MCF 10A (cell line): ENCODE measurements at regions of chr5 and their contacts with region 1.

Region 1: GRCh38 chr5:140664359-140665119 is at the start of gene WDR55:
- DNase-seq: peak; percentile 98
- H3K4me3 Mint-ChIP-seq: peak within 1 kb of the TSS; percentile 100
- H3K27ac Mint-ChIP-seq: peak within 1 kb of the TSS; percentile 98
- H3K4me1 Mint-ChIP-seq: peaks cover 32% of the 10 kb centered on the region
- H3K27me3 Mint-ChIP-seq: no peaks in the 10 kb centered on the region
- CTCF ChIP-seq: no peak
- total RNA-seq, gene WDR55: 35.0 and 36.4 TPM in 2 replicates

Region 2: DNA sequence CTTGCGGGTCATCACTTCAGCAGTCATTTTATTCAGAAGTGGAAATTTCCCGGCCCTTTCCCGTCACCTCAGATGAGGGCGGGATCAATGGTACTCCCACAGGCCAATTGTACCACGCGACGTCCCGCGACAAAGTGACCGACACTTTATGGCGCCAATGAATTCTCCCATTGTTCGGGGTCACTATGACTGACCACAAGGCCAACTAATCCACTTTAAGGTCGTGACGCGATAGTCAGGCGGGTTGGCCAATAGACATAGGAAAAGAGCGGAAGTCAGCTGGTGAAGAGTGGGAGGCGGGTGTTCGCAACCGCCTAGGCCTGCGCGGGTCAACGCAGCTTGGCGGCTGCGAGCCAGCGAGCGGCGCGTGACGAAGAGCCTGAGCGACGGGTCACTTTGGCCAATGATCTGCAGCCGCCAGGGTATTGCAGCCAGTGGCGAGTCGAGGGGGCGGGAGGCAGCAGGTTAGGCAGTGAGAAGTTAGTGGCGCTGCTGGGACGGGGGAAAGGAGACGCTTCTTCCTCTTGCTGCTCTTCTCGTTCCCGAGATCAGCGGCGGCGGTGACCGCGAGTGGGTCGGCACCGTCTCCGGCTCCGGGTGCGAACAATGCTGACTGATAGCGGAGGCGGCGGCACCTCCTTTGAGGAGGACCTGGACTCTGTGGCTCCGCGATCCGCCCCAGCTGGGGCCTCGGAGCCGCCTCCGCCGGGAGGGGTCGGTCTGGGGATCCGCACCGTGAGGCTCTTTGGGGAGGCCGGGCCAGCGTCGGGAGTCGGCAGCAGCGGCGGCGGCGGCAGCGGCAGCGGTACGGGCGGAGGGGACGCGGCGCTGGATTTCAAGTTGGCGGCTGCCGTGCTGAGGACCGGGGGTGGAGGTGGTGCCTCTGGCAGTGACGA is 262.9 kb before region 1 on chr5 and contains the start of gene ANKHD1:
- CTCF ChIA-PET with region 1: no interaction called
- POLR2A ChIA-PET with region 1: interaction called, 20 read pairs
- intact Hi-C with region 1: no loop called
- DNase-seq: peak; percentile 100
- H3K4me3 Mint-ChIP-seq: no peak within 1 kb of the TSS
- H3K27ac Mint-ChIP-seq: no peak within 1 kb of the TSS
- H3K4me1 Mint-ChIP-seq: peaks cover 19% of the 10 kb centered on the region
- H3K27me3 Mint-ChIP-seq: no peaks in the 10 kb centered on the region
- CTCF ChIP-seq: no peak
- total RNA-seq, gene ANKHD1: 142 and 146 TPM in 2 replicates

Region 3: DNA sequence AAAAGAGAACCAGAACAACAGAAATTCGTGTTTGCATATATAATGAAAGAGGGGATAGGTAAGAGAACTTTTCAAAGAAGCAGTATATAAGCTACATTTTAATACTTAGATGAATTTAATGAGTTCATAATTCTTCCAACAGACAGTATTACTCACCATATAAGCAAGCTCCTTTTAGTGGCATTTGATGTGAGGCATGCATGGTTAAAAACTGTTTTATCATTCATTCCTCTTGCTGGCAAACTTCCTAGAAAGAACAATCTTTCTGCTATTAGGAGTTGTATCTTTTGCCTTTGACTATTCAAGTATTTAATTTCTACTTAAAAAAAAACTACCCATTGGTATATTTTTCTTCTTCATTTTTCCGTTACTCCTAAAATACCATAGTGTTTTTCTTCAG is 182.8 kb before region 1 on chr5:
- CTCF ChIA-PET with region 1: no interaction called
- POLR2A ChIA-PET with region 1: no interaction called
- intact Hi-C with region 1: no loop called
- DNase-seq: no peak
- H3K4me3 Mint-ChIP-seq: no peak overlapping the region
- H3K27ac Mint-ChIP-seq: no peak overlapping the region
- H3K4me1 Mint-ChIP-seq: peaks cover 6% of the 10 kb centered on the region
- H3K27me3 Mint-ChIP-seq: no peaks in the 10 kb centered on the region
- CTCF ChIP-seq: no peak

Region 4: GRCh38 chr5:140557136-140557805 is 107.3 kb before region 1 on chr5 and contains the start of gene SRA1:
- CTCF ChIA-PET with region 1: no interaction called
- POLR2A ChIA-PET with region 1: interaction called, 33 read pairs
- intact Hi-C with region 1: no loop called
- DNase-seq: peak; percentile 96
- H3K4me3 Mint-ChIP-seq: peak within 1 kb of the TSS; percentile 87
- H3K27ac Mint-ChIP-seq: peak within 1 kb of the TSS; percentile 91
- H3K4me1 Mint-ChIP-seq: peaks cover 38% of the 10 kb centered on the region
- H3K27me3 Mint-ChIP-seq: no peaks in the 10 kb centered on the region
- CTCF ChIP-seq: no peak
- total RNA-seq, gene SRA1: 105 and 107 TPM in 2 replicates

Region 5: GRCh38 chr5:140575309-140575708 is 89.2 kb before region 1 on chr5:
- CTCF ChIA-PET with region 1: no interaction called
- POLR2A ChIA-PET with region 1: interaction called, 3 read pairs
- intact Hi-C with region 1: loop called (anchors 1 kb)
- DNase-seq: peak; percentile 92
- H3K4me3 Mint-ChIP-seq: no peak overlapping the region
- H3K27ac Mint-ChIP-seq: no peak overlapping the region
- H3K4me1 Mint-ChIP-seq: no peaks in the 10 kb centered on the region
- H3K27me3 Mint-ChIP-seq: no peaks in the 10 kb centered on the region
- CTCF ChIP-seq: peak; percentile 82

Region 6: GRCh38 chr5:140677947-140678346 is 13.4 kb after region 1 on chr5:
- CTCF ChIA-PET with region 1: interaction called, 5 read pairs
- POLR2A ChIA-PET with region 1: interaction called, 43 read pairs
- intact Hi-C with region 1: no loop called
- DNase-seq: no peak
- H3K4me3 Mint-ChIP-seq: no peak overlapping the region
- H3K27ac Mint-ChIP-seq: no peak overlapping the region
- H3K4me1 Mint-ChIP-seq: no peaks in the 10 kb centered on the region
- H3K27me3 Mint-ChIP-seq: no peaks in the 10 kb centered on the region
- CTCF ChIP-seq: no peak

Region 7: DNA sequence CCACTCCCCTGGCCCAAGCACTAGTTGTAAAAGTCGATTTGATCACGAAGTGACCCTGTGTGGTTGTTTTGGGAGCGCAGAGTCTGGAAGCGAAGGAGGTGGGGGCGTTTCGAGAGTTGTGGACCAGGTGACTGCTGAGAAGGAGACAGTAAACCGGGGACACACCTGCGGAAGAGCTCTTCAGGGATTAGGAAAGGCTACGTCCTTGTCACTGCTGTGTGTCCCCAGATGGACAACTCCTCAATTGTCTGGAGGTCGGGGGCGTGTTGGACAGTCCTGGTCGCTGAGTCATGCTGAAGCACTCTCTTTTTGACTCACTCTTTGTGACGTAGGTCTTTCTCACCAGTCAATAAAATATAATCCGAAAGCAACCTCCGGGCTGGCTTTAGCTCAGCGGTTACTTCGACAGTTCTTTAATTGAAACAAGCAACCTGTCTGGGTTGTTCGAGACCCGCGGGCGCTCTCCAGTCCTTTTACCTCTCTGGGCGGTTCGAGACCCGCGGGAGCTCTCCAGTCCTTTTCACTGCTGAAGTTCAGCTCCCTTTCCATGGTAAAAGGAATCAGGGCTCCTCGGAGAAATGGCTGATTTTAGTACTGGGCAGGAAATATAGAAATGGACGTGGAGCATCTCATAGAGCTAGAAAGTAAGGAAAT is 46.5 kb after region 1 on chr5:
- CTCF ChIA-PET with region 1: no interaction called
- POLR2A ChIA-PET with region 1: interaction called, 13 read pairs
- intact Hi-C with region 1: no loop called
- DNase-seq: peak; percentile 99
- H3K4me3 Mint-ChIP-seq: peak overlapping the region; percentile 88
- H3K27ac Mint-ChIP-seq: peak overlapping the region; percentile 94
- H3K4me1 Mint-ChIP-seq: peaks cover 5% of the 10 kb centered on the region
- H3K27me3 Mint-ChIP-seq: no peaks in the 10 kb centered on the region
- CTCF ChIP-seq: no peak